MCF 10A (cell line): ENCODE measurements at regions of chr2 and their contacts with region 1.

Region 1: DNA sequence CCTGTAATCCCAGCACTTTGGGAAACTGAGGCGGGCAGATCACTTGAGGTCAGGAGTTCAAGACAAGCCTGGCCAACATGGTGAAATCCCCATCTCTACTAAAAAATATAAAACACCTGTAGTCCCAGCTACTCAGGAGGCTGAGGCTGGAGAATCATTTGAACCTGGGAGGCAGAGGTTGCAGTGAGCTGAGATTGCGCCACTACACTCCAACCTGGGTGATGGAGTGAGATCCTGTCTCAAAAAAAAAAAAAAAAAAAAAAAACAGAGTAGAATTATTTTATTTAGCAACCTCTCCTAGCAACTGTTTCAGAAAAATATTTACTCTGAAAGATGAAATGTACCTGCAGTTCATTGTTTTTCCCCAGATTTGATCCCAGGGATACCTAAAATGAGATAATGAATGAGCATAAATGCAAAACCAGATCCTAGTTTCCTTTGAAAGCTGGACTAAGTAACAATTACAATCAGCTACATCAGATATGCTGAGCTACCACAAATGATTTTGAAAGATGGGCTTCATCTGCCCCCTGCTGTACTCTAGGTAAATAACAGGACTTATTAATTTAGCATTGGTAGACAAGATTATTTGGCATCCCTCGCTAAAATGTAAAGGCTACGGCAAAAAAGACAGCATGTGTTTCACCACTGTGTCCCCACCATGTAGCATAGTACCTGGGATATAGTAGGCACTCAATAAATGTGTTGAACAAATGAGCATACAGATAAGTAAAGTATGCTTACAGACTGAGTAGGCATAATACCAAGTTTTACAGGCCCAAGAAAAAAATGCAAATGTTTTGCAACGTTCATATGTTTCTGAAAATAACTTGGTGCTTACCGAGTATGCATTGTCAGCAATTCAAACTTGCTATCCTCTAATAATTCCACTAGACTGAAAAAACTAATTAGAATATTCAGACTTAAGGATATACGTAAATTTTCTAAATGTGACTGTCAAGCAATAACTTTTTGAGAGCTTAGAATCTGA is 102.5 kb downstream of the ATL2 start:
- DNase-seq: peak; percentile 84
- H3K4me3 Mint-ChIP-seq: no peak overlapping the region
- H3K27ac Mint-ChIP-seq: no peak overlapping the region
- H3K4me1 Mint-ChIP-seq: peaks cover 8% of the 10 kb centered on the region
- H3K27me3 Mint-ChIP-seq: no peaks in the 10 kb centered on the region
- CTCF ChIP-seq: peak; percentile 78

Region 2: DNA sequence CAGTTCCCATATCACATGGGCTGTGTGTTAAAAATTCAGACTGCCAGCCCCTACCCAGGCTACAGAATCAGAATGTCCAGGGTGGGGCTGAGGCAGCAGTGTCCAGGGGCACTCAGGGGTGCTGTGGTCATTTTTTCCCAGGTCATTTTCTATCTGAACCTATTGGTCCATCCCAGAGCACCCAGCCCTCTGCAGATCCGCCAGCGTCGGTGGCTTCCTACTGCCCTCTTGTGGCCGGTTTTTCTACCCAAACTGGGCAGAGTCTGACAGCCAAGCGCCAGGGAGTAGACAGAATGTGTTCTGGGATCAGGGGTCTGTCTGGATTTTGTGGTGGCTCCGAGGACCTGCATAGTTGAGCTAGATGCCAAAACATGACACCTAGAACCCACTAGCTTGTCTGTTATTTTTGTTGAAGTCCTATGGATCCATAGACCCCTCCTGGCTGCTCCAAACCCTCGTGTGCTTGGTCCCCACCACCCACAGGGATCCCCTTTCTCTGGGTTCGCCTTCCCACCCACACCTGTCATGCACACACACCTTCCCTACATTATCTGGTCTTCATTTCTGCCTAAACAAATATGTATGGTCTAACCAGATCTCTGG is 383.6 kb before region 1 on chr2:
- CTCF ChIA-PET with region 1: interaction called, 5 read pairs
- POLR2A ChIA-PET with region 1: no interaction called
- intact Hi-C with region 1: loop called (anchors 1 kb)
- DNase-seq: peak; percentile 73
- H3K4me3 Mint-ChIP-seq: no peak overlapping the region
- H3K27ac Mint-ChIP-seq: no peak overlapping the region
- H3K4me1 Mint-ChIP-seq: peaks cover 14% of the 10 kb centered on the region
- H3K27me3 Mint-ChIP-seq: peaks cover 6% of the 10 kb centered on the region
- CTCF ChIP-seq: peak; percentile 66

Region 3: DNA sequence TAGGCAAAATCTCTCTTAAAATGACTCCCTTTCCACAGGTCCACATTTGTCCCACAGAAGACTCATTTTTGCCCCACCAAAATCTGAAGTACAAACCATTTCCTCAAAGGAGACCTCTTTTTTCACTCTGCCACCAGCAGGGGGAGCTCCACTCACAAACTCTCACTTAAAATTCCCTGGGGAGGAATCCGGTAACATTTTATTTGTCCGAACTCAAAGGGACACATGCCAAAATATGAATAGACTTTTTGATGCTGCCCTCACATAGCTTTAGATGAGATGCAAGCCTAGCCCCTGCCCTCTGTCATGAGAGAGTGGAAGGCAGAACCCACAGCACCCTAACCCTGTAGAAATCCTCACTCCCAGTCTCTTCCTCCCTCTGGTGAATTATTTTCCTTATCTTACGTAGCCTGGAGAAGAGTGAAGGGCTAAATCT is 292.4 kb before region 1 on chr2:
- CTCF ChIA-PET with region 1: interaction called, 18 read pairs
- POLR2A ChIA-PET with region 1: interaction called, 9 read pairs
- intact Hi-C with region 1: loop called (anchors 1 kb)
- DNase-seq: peak; percentile 79
- H3K4me3 Mint-ChIP-seq: no peak overlapping the region
- H3K27ac Mint-ChIP-seq: no peak overlapping the region
- H3K4me1 Mint-ChIP-seq: peaks cover 14% of the 10 kb centered on the region
- H3K27me3 Mint-ChIP-seq: no peaks in the 10 kb centered on the region
- CTCF ChIP-seq: peak; percentile 88

Region 4: DNA sequence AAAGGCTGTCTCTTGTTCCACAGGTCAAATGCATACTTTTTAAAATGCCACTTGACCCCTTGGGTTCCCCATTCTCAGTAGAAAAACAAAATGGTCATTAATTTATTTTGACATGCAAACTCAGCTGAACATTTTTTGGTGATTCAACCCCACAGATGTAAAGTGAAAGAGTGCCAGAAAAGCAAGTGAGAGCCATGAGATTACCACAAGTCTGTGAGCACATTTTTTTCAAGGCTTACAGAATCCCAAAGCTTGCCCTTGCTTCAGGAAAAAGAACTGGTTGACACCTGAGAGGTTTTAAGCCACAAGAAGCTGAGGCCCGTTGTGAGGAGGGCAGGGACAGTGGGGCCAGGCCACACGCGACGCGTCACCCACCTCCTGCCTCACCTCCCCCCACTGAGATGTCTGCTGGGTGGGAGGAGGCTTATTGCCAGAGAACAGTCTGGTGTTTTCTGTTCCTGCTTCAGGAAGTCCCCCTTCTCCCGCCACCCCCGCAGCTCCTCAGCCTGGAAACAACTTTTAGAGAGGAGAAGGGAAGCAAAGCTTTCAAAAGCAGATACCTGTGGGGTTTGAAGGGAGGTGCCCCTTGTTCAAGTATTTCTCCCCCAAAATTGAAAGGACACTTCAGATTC is 128.2 kb before region 1 on chr2:
- CTCF ChIA-PET with region 1: interaction called, 4 read pairs
- POLR2A ChIA-PET with region 1: interaction called, 4 read pairs
- intact Hi-C with region 1: loop called (anchors 10 kb)
- DNase-seq: peak; percentile 86
- H3K4me3 Mint-ChIP-seq: peak overlapping the region; percentile 20
- H3K27ac Mint-ChIP-seq: no peak overlapping the region
- H3K4me1 Mint-ChIP-seq: peaks cover 5% of the 10 kb centered on the region
- H3K27me3 Mint-ChIP-seq: no peaks in the 10 kb centered on the region
- CTCF ChIP-seq: no peak